Dorsolateral prefrontal cortex (tissue), 120 donors: ENCODE measurements at regions of chr2 and their contacts with region 1.

Region 1: DNA sequence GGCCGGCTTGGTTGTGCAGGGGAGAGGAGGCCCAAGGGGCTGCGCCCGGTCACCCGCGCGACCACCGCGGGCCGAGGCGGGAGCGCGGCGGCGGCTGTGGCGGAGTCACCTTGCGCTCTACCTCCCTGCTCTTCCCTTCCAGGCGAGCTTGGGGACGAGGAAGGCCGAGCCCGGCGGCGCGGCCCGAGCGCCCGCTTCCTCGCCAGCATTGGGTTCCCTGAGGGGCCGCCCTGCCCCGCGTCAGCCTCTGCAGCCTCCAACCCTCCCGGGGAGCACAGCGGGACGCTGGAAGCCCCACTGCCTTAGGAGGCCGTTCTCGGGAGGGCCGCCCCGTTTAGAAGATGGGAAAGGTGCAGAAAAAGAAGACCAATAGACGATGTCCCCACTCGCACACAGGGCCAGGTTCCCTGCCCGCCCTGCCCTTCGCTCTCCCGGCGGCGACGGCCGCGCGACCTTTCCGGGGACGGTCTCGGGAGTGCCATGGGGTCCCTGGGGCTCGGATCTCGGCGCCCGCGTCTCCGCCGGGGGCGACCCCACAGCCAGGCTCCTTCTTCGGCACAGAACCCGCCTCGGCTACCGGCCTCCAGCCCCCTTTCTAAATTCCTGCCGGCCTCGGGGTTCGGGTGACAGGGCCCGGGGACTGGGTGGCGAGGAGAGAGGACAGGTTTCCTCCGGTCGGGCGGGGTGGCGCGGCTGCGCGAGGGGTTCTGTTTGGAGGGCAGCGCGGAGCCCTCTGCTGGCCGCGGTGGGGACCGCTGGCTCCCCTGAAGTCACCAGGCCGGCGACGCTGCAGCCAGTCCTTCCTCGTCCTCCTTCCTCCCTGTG is 85.5 kb downstream of the HS6ST1 start:
- DNase-seq: peak; percentile 81 to 93 (median 88)
- H3K4me3 ChIP-seq: peak overlapping the region; percentile 48 to 92 (median 78)
- H3K27ac ChIP-seq: peak overlapping the region in 55 of 59 donors; percentile 8 to 91 (median 78)
- H3K27me3 ChIP-seq: no peaks in the 10 kb centered on the region
- CTCF ChIP-seq: peak; percentile 64 to 96 (median 90)

Region 2: DNA sequence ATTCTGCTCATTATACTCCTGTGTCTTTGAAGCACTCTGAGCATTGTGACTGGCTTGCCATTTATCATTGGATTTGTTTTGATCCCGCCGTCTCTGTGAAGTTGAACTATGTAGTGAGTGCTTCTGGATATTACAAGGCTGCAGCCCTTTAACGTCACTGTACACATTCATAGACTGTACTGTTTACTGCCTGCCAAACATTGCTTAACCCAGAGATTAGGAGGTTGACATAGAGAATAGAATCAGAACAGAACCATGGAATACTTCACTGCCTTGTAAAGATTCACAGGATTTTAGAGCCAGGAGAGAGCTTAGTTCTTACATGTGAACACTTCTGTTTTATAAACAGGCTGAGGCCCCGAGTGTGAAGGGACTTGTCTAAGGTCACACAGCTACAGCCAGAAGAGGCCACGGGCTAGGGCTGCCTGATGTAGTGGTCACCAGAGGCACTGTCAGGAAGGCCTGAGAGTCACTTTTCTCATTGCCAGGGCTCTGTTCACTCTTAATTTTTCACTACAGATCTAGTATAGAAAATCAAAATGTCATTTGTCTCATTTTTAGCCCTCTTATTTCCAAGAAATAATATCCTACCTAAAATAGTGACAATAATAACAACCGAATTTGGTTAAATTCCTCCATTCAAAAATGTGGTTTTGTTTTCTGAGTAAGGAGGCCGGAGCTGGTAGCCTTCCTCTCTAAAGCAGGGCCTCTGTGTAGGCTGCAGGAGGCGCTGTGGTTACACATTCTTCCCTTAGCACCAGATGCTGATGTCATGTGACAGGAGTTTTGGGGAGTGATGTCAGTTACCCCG is 54.3 kb before region 1 on chr2:
- intact Hi-C with region 1: loop called (anchors 2 kb)
- DNase-seq: peak; percentile 38 to 79 (median 70)
- H3K4me3 ChIP-seq: peak overlapping the region in 5 of 59 donors; percentile 1 to 44 (median 14)
- H3K27ac ChIP-seq: peak overlapping the region in 11 of 59 donors; percentile 1 to 57 (median 47)
- H3K27me3 ChIP-seq: no peaks in the 10 kb centered on the region
- CTCF ChIP-seq: peak; percentile 53 to 97 (median 84)

Region 3: DNA sequence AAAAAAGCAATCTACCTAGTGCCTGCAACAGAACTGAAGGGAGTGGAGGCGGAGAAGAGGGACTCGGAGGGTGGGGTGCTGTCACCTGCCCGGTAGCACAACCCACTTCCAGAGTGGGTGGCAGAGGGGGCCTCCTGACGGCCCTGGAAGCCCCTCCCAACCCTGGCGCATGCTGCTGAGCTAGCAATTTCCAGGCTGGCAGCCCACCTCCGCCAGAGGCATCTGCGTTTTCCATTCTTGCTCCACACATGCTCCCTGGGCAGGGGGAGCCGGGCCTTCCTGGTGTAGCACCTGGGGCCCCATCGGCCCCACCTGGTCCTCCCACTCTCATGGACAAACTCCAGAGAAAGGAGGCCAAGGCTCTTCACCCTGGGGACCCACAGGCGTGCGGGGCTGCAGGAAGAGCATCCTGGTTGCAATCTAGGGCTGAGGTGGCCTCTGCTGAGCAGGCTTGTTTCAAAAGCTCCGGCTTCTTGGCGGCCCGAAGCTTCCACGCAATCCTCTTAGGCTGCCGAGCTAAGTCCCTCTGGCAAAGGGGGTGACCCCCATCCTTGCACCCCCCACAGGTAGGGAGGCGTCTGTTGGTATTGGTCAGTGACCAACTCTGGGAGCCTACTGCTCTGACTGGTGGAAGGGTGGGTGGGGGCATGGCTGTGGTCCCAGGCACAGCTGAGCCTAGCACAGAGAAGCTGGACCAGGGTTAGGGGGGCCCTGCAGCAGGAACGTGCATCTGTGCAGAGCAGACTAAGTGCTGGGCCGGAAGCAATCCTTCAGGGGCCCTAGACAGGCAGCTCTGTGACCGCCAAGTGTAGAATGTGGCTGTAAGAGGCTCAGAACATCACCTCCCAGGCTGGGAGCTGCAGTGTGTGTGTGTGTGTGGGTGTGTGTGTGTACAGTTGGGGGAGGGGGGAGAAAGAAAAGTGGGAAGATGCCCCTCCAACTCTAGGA is 82.9 kb after region 1 on chr2:
- intact Hi-C with region 1: loop called (anchors 2 kb)
- DNase-seq: peak in 9 of 10 donors; percentile 5 to 43 (median 28)
- H3K4me3 ChIP-seq: peak overlapping the region; percentile 62 to 97 (median 86)
- H3K27ac ChIP-seq: peak overlapping the region in 26 of 59 donors; percentile 2 to 84 (median 46)
- H3K27me3 ChIP-seq: no peaks in the 10 kb centered on the region
- CTCF ChIP-seq: no peak